Lower leg skin (tissue), 4 donors: ENCODE measurements at regions of chr9 and their contacts with region 1.

Region 1: GRCh38 chr9:31394015-31394473 is 990.4 kb upstream of the ACO1 start:
- DNase-seq: no peak
- H3K4me3 ChIP-seq: no peak overlapping the region
- CTCF ChIP-seq: no peak
- POLR2A ChIP-seq: no peak

Region 2: GRCh38 chr9:31418419-31418818 is 24.4 kb after region 1 on chr9:
- intact Hi-C with region 1: no loop called
- DNase-seq: no peak
- H3K4me3 ChIP-seq: no peak overlapping the region
- CTCF ChIP-seq: no peak
- POLR2A ChIP-seq: no peak

Region 3: GRCh38 chr9:31445960-31446359 is 51.9 kb after region 1 on chr9:
- intact Hi-C with region 1: loop called (anchors 1 kb)
- DNase-seq: no peak
- H3K4me3 ChIP-seq: no peak overlapping the region
- CTCF ChIP-seq: no peak
- POLR2A ChIP-seq: no peak